Endothelial cell of umbilical vein (primary cell): ENCODE measurements at regions of chr11 and their contacts with region 1.

Region 1: GRCh38 chr11:61384271-61385242 is 7.8 kb upstream of the TMEM216 start:
- DNase-seq: peak; percentile 43
- H3K4me3 ChIP-seq: no peak overlapping the region
- H3K27ac ChIP-seq: no peak overlapping the region
- H3K4me1 ChIP-seq: no peaks in the 10 kb centered on the region
- H3K27me3 ChIP-seq: no peaks in the 10 kb centered on the region
- CTCF ChIP-seq: peak; percentile 32 to 42
- POLR2A ChIP-seq: no peak

Region 2: DNA sequence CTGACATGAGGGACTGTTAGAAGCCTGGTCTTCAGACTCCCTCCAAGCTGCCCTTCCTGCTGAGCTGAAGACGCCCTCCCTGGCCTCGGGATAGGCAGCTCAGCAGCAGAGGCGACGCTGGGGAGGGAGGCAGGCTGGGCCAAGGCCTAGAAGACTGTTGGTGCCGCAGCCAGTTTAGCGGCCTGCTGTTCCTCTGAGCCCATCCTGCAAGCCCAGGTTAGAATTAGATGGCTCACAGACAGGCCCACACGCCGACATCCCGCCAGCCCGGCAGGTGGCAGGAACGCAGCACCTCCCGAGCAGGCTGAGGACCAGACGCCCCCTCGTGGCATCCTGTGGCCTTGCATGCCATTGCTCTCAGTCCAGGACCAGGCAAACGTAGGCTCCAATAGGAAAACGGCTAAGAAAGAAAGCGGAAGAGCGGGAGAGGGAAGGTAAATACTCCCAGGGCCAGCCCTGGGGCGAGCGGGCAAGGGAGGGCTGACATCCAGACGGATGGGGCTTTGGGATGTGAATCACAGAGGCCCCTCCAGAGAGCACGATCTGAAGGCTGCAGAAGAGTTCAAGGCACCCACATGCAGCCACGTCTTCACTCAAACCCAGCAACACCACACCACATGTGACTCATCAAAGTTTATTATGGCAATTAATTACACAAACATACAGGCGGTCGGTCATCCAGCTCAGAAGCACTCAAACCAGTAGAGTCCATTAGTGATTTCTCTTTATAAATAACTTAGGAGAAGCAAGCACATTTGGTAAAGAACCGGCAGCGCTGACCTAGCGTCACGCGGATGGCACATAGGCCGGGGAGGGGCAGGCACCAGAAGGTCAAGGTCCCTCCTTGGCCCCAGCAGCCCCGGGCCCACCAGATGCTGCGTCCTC is 254.7 kb before region 1 on chr11:
- CTCF ChIA-PET with region 1: no interaction called
- POLR2A ChIA-PET with region 1: no interaction called
- dilution Hi-C with region 1: no loop called
- intact Hi-C with region 1: loop called (anchors 2 kb)
- DNase-seq: peak; percentile 93
- H3K4me3 ChIP-seq: no peak overlapping the region
- H3K27ac ChIP-seq: peak overlapping the region; percentile 2
- H3K4me1 ChIP-seq: peaks cover 3% of the 10 kb centered on the region
- H3K27me3 ChIP-seq: peaks cover 9 to 10% of the 10 kb centered on the region in 2 experiments
- CTCF ChIP-seq: peak; percentile 100
- POLR2A ChIP-seq: no peak

Region 3: DNA sequence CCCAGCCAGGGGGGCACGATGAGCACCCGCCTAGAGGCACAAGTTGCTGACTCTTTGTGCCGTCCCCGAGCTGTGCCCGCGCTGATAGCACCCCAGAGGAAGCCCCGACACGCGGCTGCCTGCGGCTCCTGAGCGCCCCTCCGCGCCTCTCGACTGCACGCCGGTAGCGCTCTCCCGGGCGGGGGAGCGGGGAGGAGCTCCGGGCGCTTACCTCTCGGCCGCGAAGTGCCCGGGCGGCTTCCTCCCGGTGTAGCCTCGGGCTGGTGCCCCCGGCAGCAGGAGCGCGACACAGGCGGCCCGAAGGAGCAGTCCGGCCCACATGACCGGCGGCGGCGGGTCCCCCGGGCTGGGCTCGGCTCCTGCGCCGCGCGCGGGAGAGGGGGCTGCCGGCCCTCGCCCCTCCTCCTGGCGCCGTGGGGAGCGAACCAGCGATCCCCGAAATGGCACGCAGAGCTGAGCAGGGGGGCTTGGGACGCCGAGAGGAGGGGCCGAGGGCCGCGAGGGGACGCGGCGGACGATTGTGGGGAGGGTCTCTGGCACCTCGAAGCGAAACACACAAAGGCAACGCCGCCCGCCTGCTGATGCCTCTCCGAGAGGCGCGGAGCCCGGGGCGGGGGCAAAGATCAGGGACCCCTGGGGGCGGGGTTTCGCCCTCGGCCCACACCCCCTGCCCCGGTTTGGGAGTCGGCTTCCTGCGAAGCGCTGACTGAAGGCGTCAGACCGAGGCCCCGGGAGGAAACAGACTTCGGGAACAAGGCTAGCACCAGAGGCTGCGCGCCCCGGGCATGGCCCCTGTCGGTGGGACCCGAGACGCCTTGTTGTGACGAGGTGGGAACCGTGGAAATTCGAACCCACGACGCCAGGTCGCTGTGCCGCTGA is 89.6 kb before region 1 on chr11 and contains the start of gene VWCE:
- CTCF ChIA-PET with region 1: interaction called, 5 read pairs
- POLR2A ChIA-PET with region 1: no interaction called
- dilution Hi-C with region 1: no loop called
- intact Hi-C with region 1: loop called (anchors 1 kb)
- DNase-seq: peak; percentile 56
- H3K4me3 ChIP-seq: peak within 1 kb of the TSS; percentile 8 to 48 (median 45)
- H3K27ac ChIP-seq: no peak within 1 kb of the TSS
- H3K4me1 ChIP-seq: peaks cover 41% of the 10 kb centered on the region
- H3K27me3 ChIP-seq: peaks cover 5 to 9% of the 10 kb centered on the region in 2 experiments
- CTCF ChIP-seq: peak; percentile 10 to 29
- POLR2A ChIP-seq: no peak
- total RNA-seq, gene VWCE: 14.4 and 14.8 TPM in 2 replicates

Region 4: DNA sequence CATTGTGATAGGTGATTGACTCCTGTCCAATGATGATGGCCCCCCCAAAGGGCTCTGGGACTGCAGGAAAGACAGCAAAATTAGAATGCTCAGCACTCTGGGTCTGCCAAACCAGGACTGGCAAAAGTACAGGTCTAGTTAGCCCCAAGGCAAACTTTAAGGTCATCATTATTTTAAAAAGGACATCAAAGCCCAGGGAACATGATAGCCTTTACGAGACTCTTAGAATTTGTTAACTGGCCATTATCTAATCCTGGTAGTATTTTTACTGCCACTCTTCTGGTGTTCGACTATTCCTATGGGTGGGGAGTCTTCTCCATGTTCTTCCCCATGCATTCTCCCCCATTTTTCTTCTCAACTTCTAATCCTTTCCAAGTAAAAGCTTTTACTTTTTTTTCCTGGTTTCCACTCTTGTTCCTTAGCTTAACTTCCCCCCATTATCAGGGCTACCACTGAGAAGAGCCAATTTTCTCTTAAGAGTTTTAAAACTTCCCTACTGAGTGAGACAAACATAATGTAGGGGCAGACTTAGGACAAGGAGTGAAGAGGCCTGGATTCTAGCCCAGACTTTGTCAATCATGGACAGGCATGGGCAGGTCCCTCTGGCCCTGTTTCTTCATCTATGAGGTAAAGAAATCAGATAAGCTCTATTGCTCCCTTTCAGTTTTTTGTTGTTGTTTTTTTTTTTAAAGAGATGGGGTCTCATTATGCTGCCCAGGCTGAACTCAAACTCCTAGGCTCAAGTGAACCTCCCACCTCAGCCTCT is 58.7 kb before region 1 on chr11:
- CTCF ChIA-PET with region 1: interaction called, 23 read pairs
- POLR2A ChIA-PET with region 1: no interaction called
- dilution Hi-C with region 1: no loop called
- intact Hi-C with region 1: no loop called
- DNase-seq: no peak
- H3K4me3 ChIP-seq: no peak overlapping the region
- H3K27ac ChIP-seq: no peak overlapping the region
- H3K4me1 ChIP-seq: no peaks in the 10 kb centered on the region
- H3K27me3 ChIP-seq: no peaks in the 10 kb centered on the region
- CTCF ChIP-seq: no peak
- POLR2A ChIP-seq: no peak

Region 5: GRCh38 chr11:61342207-61342803 is 42.3 kb before region 1 on chr11:
- CTCF ChIA-PET with region 1: interaction called, 345 read pairs
- POLR2A ChIA-PET with region 1: no interaction called
- dilution Hi-C with region 1: no loop called
- intact Hi-C with region 1: no loop called
- DNase-seq: no peak
- H3K4me3 ChIP-seq: no peak overlapping the region
- H3K27ac ChIP-seq: no peak overlapping the region
- H3K4me1 ChIP-seq: no peaks in the 10 kb centered on the region
- H3K27me3 ChIP-seq: no peaks in the 10 kb centered on the region
- CTCF ChIP-seq: no peak
- POLR2A ChIP-seq: no peak

Region 6: DNA sequence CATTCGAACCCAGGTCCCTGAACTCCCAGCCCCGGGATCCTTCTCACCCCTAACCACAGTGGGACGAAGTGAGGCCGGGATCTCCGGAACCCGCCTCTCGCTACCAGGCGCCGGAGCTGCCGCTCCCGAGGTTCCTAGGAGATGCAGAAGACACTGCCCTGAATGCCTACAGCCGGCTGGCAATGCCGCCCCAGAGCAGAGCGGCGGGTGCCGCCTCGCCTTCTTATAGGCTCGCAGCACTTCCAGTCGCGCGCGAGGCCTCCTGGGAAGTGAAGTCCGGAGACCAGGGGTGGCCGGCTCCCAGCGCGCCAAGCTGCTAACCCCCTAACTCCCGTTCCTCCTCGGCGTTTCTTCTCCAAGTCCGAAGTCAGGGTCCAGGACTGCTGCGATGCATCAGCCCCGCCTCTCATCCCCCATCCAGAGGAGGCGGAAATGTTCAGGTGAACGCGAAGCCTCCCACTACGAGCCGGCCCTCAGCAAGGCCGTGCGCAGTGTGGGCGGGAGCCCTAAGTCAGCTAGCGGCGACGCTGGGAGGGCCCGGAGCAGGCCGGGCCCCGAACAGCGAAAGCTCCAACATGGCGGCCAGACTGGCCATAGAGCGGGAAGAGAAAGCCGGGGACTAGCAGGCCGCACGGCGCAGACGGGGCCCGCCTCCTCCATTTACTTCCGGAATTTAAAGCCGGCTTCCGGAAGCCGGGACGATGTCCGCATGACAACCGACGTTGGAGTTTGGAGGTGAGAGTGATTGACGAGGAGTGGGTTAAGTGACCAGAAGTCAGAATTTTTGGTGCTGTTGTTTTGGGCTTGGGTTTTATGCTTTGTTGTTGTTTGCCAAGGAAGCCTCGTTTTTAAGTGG is 22.6 kb before region 1 on chr11 and contains the starts of genes CYB561A3 and TMEM138:
- CTCF ChIA-PET with region 1: interaction called, 89 read pairs
- POLR2A ChIA-PET with region 1: interaction called, 4 read pairs
- dilution Hi-C with region 1: no loop called
- intact Hi-C with region 1: no loop called
- DNase-seq: peak; percentile 94
- H3K4me3 ChIP-seq: peak within 1 kb of the TSS; percentile 53 to 83 (median 76)
- H3K27ac ChIP-seq: peak within 1 kb of the TSS; percentile 63
- H3K4me1 ChIP-seq: peaks cover 18% of the 10 kb centered on the region
- H3K27me3 ChIP-seq: no peaks in the 10 kb centered on the region
- CTCF ChIP-seq: no peak
- POLR2A ChIP-seq: peak; percentile 97
- total RNA-seq, gene CYB561A3: 41.6 and 44.0 TPM in 2 replicates
- total RNA-seq, gene TMEM138: 37.9 and 43.6 TPM in 2 replicates

Region 7: GRCh38 chr11:61489833-61490721 is 105.5 kb after region 1 on chr11:
- CTCF ChIA-PET with region 1: no interaction called
- POLR2A ChIA-PET with region 1: no interaction called
- dilution Hi-C with region 1: no loop called
- intact Hi-C with region 1: no loop called
- DNase-seq: no peak
- H3K4me3 ChIP-seq: no peak overlapping the region
- H3K27ac ChIP-seq: no peak overlapping the region
- H3K4me1 ChIP-seq: no peaks in the 10 kb centered on the region
- H3K27me3 ChIP-seq: no peaks in the 10 kb centered on the region
- CTCF ChIP-seq: no peak
- POLR2A ChIP-seq: no peak